Naive thymus-derived CD4-positive, alpha-beta T cell (primary cell): ENCODE measurements at regions of chr12 and their contacts with region 1.

Region 1: DNA sequence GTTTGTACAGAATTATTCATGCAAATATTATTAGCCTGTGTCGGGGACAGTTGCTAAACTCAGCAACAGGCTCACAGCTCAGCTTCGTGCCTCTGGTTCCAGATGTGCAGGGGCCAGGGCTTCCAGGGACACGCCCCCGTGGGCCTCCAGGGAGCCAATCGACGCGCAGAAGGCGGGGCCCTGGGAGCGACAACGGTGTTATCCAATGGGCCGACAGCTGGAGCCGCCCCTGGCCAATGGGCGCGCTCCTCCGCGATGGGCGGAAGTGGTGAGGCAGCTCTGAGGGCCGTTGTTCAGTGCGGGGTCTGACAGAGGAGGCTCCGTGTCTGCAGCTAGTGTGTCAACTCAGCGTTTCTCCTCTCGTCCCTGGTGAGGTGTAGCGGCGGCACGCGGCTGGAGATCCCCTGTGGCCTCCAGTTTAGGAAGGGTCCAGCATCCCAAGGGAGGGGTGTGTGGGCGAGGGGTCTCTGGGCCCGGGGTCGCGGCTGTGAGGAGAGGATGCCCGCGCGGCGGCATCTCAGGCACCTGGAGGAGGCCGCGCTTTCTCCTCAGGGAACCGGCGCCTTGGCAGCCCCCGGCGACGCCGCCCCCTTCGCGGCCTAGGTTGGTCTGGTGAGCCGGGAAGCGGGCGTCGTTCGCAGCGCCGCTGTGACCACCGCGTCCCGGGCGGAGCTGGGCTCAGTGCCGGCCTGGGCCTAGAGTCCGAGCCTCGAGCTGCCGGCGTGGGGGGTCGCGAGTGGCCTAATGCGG is at the start of gene TRAFD1:
- DNase-seq: peak; percentile 96 to 99 (median 98)
- ATAC-seq: peak; percentile 100
- H3K4me3 ChIP-seq: peak within 1 kb of the TSS; percentile 97
- H3K4me3 Mint-ChIP-seq: peak within 1 kb of the TSS; percentile 74 to 91 (median 88)
- H3K27ac ChIP-seq: peak within 1 kb of the TSS; percentile 93
- H3K27ac Mint-ChIP-seq: peak within 1 kb of the TSS; percentile 77 to 95 (median 88)
- H3K4me1 ChIP-seq: peaks cover 26 to 38% of the 10 kb centered on the region in 2 donors
- H3K4me1 Mint-ChIP-seq: peaks cover 21 to 49% (median 39%) of the 10 kb centered on the region in 7 donors
- H3K27me3 ChIP-seq: no peaks in the 10 kb centered on the region
- H3K27me3 Mint-ChIP-seq: peaks cover 0 to 10% (median 0%) of the 10 kb centered on the region in 5 donors
- total RNA-seq, gene TRAFD1: 22.1 to 86.6 (median 42.7) TPM

Region 2: DNA sequence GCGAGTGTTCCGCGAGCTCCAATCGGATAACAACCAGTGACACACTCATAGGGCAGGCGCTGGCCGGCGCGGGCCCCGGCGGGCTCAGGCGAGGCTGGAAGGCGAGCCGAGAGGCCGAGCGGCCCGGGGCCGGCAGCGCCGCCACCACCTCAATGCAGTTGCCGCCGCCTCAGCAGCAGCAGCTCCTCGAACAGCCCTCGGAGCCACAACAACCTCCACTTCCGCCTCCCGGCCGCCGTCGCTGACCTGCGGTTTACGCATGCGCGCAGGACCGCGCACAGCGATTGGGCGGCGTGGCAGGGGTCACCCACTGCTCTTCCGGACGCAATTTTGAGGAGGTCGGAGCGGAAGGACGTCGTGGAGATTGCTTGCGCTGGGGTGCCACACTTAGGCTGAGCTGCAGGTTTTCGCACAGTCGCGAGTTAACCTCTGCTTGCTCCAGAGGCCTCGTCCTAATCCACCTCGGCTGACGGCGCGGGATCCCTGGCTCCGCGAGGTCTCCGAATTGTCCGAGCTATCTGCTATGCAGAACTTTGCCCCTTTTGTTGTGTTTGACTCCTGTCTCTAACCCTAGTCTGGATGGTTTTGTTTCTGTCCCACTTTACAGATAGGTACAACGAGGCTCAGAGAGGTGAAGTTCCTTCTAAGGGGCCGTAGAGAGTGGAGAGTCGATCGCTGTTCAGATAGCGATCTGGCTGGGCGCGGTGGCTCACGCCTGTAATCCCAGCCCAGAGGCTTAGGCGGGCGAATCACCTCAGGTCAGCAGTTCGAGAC is 439.5 kb before region 1 on chr12 and contains the starts of genes ACAD10 and BRAP:
- CTCF ChIA-PET with region 1: no interaction called
- POLR2A ChIA-PET with region 1: no interaction called
- intact Hi-C with region 1: loop called in 1 of 2 experiments (anchors 1 kb)
- DNase-seq: peak; percentile 82 to 98 (median 93)
- ATAC-seq: peak; percentile 96
- H3K4me3 ChIP-seq: peak within 1 kb of the TSS; percentile 90
- H3K4me3 Mint-ChIP-seq: peak within 1 kb of the TSS; percentile 90 to 98 (median 96)
- H3K27ac ChIP-seq: peak within 1 kb of the TSS; percentile 83
- H3K27ac Mint-ChIP-seq: peak within 1 kb of the TSS; percentile 90 to 98 (median 96)
- H3K4me1 ChIP-seq: peaks cover 17 to 18% of the 10 kb centered on the region in 2 donors
- H3K4me1 Mint-ChIP-seq: peaks cover 23 to 54% (median 44%) of the 10 kb centered on the region in 7 donors
- H3K27me3 ChIP-seq: no peaks in the 10 kb centered on the region
- H3K27me3 Mint-ChIP-seq: peaks cover 0 to 2% (median 0%) of the 10 kb centered on the region in 5 donors
- total RNA-seq, gene ACAD10: 28.4 to 65.3 (median 36.0) TPM
- total RNA-seq, gene BRAP: 19.5 to 25.5 (median 23.0) TPM

Region 3: DNA sequence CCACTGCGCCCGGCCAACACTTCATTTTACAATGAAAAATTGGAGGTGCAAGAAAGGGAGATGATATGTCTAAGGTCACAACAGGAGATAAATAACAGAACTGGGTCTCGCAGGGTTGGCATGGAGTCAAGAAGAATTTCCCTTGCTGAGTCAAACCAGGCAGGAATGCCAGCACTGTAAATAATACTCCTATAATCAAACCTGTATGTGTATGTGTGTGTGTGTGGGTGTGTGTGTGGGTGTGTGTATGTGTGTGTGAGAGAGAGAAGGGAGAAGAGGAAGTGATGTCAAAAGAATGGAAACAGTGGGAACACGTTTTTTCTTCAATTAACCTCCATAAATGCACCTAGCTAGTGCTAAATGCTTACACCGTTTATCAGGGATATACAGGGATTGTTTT is 182.9 kb before region 1 on chr12:
- CTCF ChIA-PET with region 1: no interaction called
- POLR2A ChIA-PET with region 1: no interaction called
- intact Hi-C with region 1: loop called (anchors 1 to 5 kb)
- DNase-seq: no peak
- ATAC-seq: no peak
- H3K4me3 ChIP-seq: no peak overlapping the region
- H3K4me3 Mint-ChIP-seq: no peak overlapping the region
- H3K27ac ChIP-seq: no peak overlapping the region
- H3K27ac Mint-ChIP-seq: no peak overlapping the region
- H3K4me1 ChIP-seq: peaks cover 0 to 3% of the 10 kb centered on the region in 2 donors
- H3K4me1 Mint-ChIP-seq: peaks cover 0 to 25% (median 12%) of the 10 kb centered on the region in 7 donors
- H3K27me3 ChIP-seq: no peaks in the 10 kb centered on the region
- H3K27me3 Mint-ChIP-seq: no peaks in the 10 kb centered on the region

Region 4: DNA sequence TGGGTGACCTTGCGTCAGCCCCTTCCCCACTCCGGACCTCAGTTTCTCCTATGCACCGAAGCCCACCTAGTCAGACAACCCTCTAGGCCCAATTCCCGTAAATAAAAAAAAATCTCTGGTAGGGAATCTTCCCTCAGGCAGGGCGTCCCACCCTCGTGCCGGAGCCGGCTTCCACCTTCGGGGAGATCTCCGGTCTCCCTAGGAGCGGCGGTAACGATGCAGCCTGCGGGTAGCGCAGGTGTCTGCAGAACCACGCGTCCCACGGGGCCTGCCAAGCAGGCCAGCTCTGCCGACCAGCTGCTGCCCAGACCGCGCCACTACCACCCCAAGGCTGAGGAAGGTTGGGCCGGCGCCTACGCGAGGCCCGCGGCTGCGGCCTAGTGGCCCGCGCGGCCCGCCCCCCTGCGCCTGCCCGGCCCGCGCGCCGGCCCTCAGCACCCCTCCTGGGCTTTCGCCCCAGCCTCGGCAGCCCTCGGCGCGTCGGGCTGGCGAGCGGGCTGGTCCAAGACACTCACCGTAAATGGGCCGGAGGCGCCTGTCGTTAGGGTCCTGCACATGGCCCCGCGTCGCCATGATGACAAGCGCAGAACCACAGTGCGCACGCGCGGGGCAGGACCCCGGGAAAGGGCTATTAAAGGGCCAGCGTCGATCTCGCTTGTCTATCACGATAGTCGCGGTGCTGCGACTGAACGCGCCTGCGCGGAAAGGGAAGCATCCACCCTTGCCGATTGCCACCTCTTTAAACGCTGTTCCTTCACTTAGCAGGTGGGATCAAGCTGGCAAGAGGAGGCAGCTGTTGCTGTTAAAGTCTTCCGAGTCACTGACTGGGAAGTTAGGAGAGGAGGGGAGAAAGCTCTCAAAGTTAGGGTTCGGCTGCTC is 17.0 kb before region 1 on chr12 and contains the start of gene NAA25:
- CTCF ChIA-PET with region 1: interaction called, 8 read pairs
- POLR2A ChIA-PET with region 1: interaction called, 81 read pairs
- intact Hi-C with region 1: loop called (anchors 1 kb)
- DNase-seq: peak; percentile 79 to 90 (median 86)
- ATAC-seq: peak; percentile 92
- H3K4me3 ChIP-seq: peak within 1 kb of the TSS; percentile 100
- H3K4me3 Mint-ChIP-seq: peak within 1 kb of the TSS; percentile 96 to 99 (median 98)
- H3K27ac ChIP-seq: peak within 1 kb of the TSS; percentile 92
- H3K27ac Mint-ChIP-seq: peak within 1 kb of the TSS; percentile 93 to 98 (median 97)
- H3K4me1 ChIP-seq: peaks cover 12 to 22% of the 10 kb centered on the region in 2 donors
- H3K4me1 Mint-ChIP-seq: peaks cover 27 to 53% (median 45%) of the 10 kb centered on the region in 7 donors
- H3K27me3 ChIP-seq: no peaks in the 10 kb centered on the region
- H3K27me3 Mint-ChIP-seq: no peaks in the 10 kb centered on the region
- total RNA-seq, gene NAA25: 39.1 to 43.0 (median 42.1) TPM

Region 5: GRCh38 chr12:112159146-112159541 is 33.7 kb after region 1 on chr12:
- CTCF ChIA-PET with region 1: no interaction called
- POLR2A ChIA-PET with region 1: interaction called, 16 read pairs
- intact Hi-C with region 1: no loop called
- DNase-seq: no peak
- ATAC-seq: no peak
- H3K4me3 ChIP-seq: no peak overlapping the region
- H3K4me3 Mint-ChIP-seq: peak overlapping the region in 5 of 10 donors; percentile 14 to 48 (median 41)
- H3K27ac ChIP-seq: no peak overlapping the region
- H3K27ac Mint-ChIP-seq: peak overlapping the region in 8 of 9 donors; percentile 31 to 81 (median 69)
- H3K4me1 ChIP-seq: peaks cover 5 to 8% of the 10 kb centered on the region in 2 donors
- H3K4me1 Mint-ChIP-seq: peaks cover 7 to 34% (median 20%) of the 10 kb centered on the region in 7 donors
- H3K27me3 ChIP-seq: no peaks in the 10 kb centered on the region
- H3K27me3 Mint-ChIP-seq: no peaks in the 10 kb centered on the region

Region 6: GRCh38 chr12:112389228-112389627 is 263.8 kb after region 1 on chr12:
- CTCF ChIA-PET with region 1: no interaction called
- POLR2A ChIA-PET with region 1: no interaction called
- intact Hi-C with region 1: no loop called
- DNase-seq: no peak
- ATAC-seq: no peak
- H3K4me3 ChIP-seq: no peak overlapping the region
- H3K4me3 Mint-ChIP-seq: no peak overlapping the region
- H3K27ac ChIP-seq: no peak overlapping the region
- H3K27ac Mint-ChIP-seq: peak overlapping the region in 1 of 9 donors; percentile 22
- H3K4me1 ChIP-seq: no peaks in the 10 kb centered on the region
- H3K4me1 Mint-ChIP-seq: peaks cover 0 to 8% (median 6%) of the 10 kb centered on the region in 7 donors
- H3K27me3 ChIP-seq: no peaks in the 10 kb centered on the region
- H3K27me3 Mint-ChIP-seq: peaks cover 0 to 20% (median 5%) of the 10 kb centered on the region in 5 donors

Region 7: DNA sequence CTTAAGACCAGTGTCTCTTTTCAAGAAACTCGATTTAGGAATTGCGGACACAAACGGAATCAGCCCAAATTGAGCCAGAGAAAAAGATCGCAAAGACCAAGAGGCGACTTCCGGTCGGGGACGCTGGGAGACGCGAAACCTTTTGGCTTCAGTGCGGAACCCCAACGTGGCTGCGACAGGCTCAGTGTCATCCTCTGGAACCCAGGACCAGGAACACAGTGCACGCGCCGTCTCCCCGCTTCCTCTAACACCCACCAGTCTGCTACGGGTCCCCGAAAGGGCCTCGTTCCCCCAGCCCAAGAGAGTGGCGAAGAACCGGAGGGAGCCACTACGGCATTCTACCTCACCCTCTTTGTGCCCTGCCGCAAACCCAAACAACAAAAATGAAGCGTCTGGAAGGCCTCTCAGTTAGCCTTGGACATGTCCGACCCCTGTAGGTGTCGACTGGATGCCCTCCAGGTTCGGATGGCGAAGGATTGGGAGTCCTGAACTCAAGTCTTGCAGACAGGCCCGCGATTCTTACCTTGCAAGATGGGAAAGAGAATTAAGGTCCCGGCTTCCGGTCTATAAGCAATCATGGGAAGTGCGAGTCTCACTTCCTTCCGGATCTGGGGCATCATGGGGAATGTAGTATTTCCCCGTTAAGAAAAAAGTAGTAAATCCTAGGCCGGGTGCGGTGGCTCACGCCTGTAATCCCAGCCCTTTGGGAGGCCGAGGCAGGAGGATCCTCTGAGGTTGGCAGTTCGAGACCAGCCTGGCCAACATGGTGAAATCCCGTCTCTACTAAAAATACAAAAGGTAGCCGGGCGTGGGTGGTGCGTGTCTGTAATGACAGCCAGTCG is 283.9 kb after region 1 on chr12 and contains the start of gene RPL6:
- CTCF ChIA-PET with region 1: no interaction called
- POLR2A ChIA-PET with region 1: no interaction called
- intact Hi-C with region 1: loop called in 1 of 2 experiments (anchors 1 kb)
- DNase-seq: peak; percentile 61 to 88 (median 84)
- ATAC-seq: peak; percentile 94
- H3K4me3 ChIP-seq: peak within 1 kb of the TSS; percentile 93
- H3K4me3 Mint-ChIP-seq: peak within 1 kb of the TSS; percentile 97 to 100 (median 100)
- H3K27ac ChIP-seq: peak within 1 kb of the TSS; percentile 84
- H3K27ac Mint-ChIP-seq: peak within 1 kb of the TSS; percentile 99 to 100 (median 100)
- H3K4me1 ChIP-seq: peaks cover 18 to 20% of the 10 kb centered on the region in 2 donors
- H3K4me1 Mint-ChIP-seq: peaks cover 17 to 48% (median 36%) of the 10 kb centered on the region in 7 donors
- H3K27me3 ChIP-seq: no peaks in the 10 kb centered on the region
- H3K27me3 Mint-ChIP-seq: no peaks in the 10 kb centered on the region
- total RNA-seq, gene RPL6: 1,134 to 1,668 (median 1,601) TPM